H1 (cell line): ENCODE measurements at regions of chr14 and their contacts with region 1.

Region 1: DNA sequence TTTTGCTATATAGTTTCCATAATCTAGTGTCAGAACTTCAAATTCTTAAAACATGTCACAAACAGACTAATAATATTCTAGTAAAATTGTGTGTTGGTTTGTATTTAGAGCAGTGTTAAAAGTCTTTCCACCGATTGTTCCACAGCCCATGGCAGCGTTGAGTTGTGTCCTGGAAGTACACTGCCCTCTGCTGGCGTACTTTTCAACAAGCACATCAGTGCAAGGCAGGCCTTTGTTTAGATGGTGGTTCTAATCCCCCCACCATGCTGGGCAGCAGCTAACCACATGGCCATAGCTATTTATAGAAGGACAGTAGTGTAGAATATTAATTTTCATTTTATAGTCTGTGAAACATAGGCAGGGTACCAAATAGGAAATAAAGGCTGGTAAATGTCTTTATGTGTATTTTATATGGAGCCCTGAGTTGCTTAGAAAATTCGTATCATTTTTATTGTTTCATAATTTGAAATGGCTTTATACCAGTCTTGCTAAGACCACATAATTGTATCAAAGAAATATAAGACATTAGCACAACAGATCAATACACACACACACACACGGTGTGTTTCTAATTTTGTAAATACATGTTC is 235.4 kb downstream of the SEC23A start:
- DNase-seq: peak; percentile 23 to 81
- H3K4me3 ChIP-seq: no peak overlapping the region
- H3K27ac ChIP-seq: no peak overlapping the region
- H3K4me1 ChIP-seq: peaks cover 0 to 3% (median 1%) of the 10 kb centered on the region in 4 experiments; a peak in 3 of 7 replicates
- H3K27me3 ChIP-seq: peaks cover 0 to 1% (median 0%) of the 10 kb centered on the region in 4 experiments; a peak in 1 of 7 replicates
- CTCF ChIP-seq: peak; percentile 77 to 86 (median 85)
- EP300 ChIP-seq: no peak
- POLR2A ChIP-seq: no peak
- RAD21 ChIP-seq: peak; percentile 95 to 96

Region 2: DNA sequence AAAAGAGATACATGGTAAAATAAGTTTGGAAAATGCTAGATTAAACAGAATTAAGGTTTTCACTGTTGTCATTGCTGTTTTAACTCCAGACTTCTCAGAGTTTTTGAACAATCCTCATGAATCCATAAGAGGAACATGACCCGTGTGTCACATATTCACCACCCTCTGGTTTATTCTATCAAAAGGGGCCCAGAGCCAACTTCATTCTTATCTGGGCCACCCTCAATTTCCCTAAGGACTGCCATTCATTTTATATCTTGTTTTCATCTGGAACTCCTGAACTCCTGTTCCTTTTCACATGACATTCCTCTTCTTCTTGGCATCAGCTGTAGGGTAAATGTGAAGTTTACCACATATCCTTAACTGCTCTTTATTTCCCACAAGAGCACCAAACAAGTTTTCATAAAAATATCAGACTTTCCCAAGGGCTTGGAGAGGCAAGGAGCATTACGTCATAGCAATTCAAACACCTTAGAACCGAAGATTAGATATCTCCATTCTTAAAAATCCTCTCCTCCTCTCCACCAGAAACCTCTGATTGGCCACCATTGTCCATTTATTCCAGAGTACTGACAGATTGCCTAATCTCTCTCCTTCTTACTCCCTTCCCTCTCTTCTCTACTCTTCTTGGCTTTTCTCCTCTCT is 10.2 kb after region 1 on chr14:
- CTCF ChIA-PET with region 1: interaction called, 18 read pairs
- POLR2A ChIA-PET with region 1: no interaction called
- DNase-seq: no peak
- H3K4me3 ChIP-seq: no peak overlapping the region
- H3K27ac ChIP-seq: no peak overlapping the region
- H3K4me1 ChIP-seq: no peaks in the 10 kb centered on the region
- H3K27me3 ChIP-seq: no peaks in the 10 kb centered on the region
- CTCF ChIP-seq: no peak
- EP300 ChIP-seq: no peak
- POLR2A ChIP-seq: no peak
- RAD21 ChIP-seq: no peak